ENCODE measurements at regions of chr10 and their contacts with region 1.

Region 1: GRCh38 chr10:96831867-96832720 is at the start of gene LCOR:
- DNase-seq: peak; percentile 71
- ATAC-seq: peak; percentile 62
- H3K4me3 ChIP-seq: peak within 1 kb of the TSS; percentile 84 to 95 (median 88)
- H3K27ac ChIP-seq: peak within 1 kb of the TSS; percentile 82
- H3K4me1 ChIP-seq: peaks cover 48% of the 10 kb centered on the region
- H3K27me3 ChIP-seq: peaks cover 0 to 1% of the 10 kb centered on the region in 2 experiments; a peak in 1 of 5 replicates
- CTCF ChIP-seq: no peak
- EP300 ChIP-seq: no peak
- POLR2A ChIP-seq: peak; percentile 75 to 90
- RAD21 ChIP-seq: no peak
- total RNA-seq, gene LCOR: 23.7 and 42.0 TPM in 2 replicates

Region 2: DNA sequence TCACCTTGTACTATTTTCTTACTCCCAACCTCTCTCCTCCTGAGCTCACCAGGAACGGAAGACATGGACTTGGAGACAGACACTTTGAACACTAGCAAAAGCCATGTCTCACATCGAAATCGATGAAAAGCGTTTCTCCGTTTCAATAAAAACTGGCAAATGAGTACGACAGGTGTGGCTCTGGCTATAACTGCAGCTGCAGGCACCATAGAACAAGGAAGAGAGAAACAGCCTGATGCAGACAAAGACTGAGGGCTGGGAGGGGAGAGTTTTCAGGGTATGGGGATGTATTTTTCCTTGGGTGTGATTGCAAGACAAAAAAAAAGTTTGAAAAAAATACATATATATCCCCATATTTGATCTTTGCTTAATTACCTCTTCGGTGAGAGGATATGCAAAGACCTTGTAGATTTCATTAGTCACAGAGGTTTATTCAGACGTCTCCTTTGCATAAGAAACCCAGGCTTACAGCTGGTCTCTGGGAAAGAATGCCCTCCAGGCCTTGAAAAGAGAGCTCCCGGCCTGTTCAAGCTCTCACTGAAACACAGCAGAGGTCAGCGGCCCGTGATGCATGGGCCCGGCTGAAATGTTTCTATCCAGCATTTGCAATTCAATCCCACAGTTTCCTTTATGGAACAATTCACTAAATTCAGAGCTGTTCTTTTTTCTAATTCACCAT is 381.4 kb before region 1 on chr10:
- CTCF ChIA-PET with region 1: no interaction called
- POLR2A ChIA-PET with region 1: no interaction called
- in situ Hi-C with region 1: no loop called
- intact Hi-C with region 1: no loop called
- DNase-seq: no peak
- ATAC-seq: no peak
- H3K4me3 ChIP-seq: no peak overlapping the region
- H3K27ac ChIP-seq: no peak overlapping the region
- H3K4me1 ChIP-seq: no peaks in the 10 kb centered on the region
- H3K27me3 ChIP-seq: peaks cover 5 to 26% of the 10 kb centered on the region in 2 experiments; a peak in 4 of 5 replicates
- CTCF ChIP-seq: no peak
- EP300 ChIP-seq: no peak
- POLR2A ChIP-seq: no peak
- RAD21 ChIP-seq: no peak

Region 3: DNA sequence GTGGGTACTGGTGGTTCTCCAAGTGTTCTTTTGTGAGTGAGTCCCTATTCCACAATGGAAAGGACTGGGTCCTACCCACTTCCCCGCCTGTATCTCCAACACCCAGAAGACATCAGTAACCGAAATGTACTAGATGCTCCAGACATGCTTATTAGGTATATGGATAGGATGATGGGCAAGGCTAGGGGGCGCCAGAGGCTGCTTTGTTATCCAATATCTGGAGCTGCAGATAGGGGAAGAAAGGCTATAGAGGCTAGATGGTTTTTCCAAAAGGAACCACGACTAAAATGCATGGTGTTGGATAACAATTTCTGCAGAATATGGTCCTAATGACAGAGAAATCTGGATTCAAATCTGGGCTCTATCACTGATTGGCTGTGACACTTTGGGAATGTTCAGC is 189.1 kb before region 1 on chr10:
- CTCF ChIA-PET with region 1: interaction called, 8 read pairs
- POLR2A ChIA-PET with region 1: no interaction called
- in situ Hi-C with region 1: no loop called
- intact Hi-C with region 1: loop called (anchors 5 kb)
- DNase-seq: peak; percentile 54
- ATAC-seq: peak; percentile 84
- H3K4me3 ChIP-seq: no peak overlapping the region
- H3K27ac ChIP-seq: no peak overlapping the region
- H3K4me1 ChIP-seq: peaks cover 27% of the 10 kb centered on the region
- H3K27me3 ChIP-seq: no peaks in the 10 kb centered on the region; a peak in 1 of 5 replicates
- CTCF ChIP-seq: peak; percentile 81
- EP300 ChIP-seq: no peak
- POLR2A ChIP-seq: no peak
- RAD21 ChIP-seq: peak; percentile 72

Region 4: GRCh38 chr10:96765406-96766240 is 66.5 kb before region 1 on chr10:
- CTCF ChIA-PET with region 1: interaction called, 48 read pairs
- POLR2A ChIA-PET with region 1: no interaction called
- in situ Hi-C with region 1: loop called (anchors 5 kb)
- intact Hi-C with region 1: loop called (anchors 1 kb)
- DNase-seq: peak; percentile 62
- ATAC-seq: peak; percentile 97
- H3K4me3 ChIP-seq: no peak overlapping the region
- H3K27ac ChIP-seq: no peak overlapping the region
- H3K4me1 ChIP-seq: no peaks in the 10 kb centered on the region
- H3K27me3 ChIP-seq: no peaks in the 10 kb centered on the region
- CTCF ChIP-seq: peak; percentile 92
- EP300 ChIP-seq: no peak
- POLR2A ChIP-seq: no peak
- RAD21 ChIP-seq: peak; percentile 86

Region 5: GRCh38 chr10:96794866-96795733 is 37.0 kb before region 1 on chr10:
- CTCF ChIA-PET with region 1: no interaction called
- POLR2A ChIA-PET with region 1: interaction called, 3 read pairs
- in situ Hi-C with region 1: no loop called
- intact Hi-C with region 1: loop called (anchors 5 kb)
- DNase-seq: peak; percentile 27
- ATAC-seq: peak; percentile 49
- H3K4me3 ChIP-seq: peak overlapping the region in 2 of 3 experiments; percentile 4 to 26; a peak in 3 of 6 replicates
- H3K27ac ChIP-seq: no peak overlapping the region
- H3K4me1 ChIP-seq: peaks cover 49% of the 10 kb centered on the region
- H3K27me3 ChIP-seq: no peaks in the 10 kb centered on the region
- CTCF ChIP-seq: no peak
- EP300 ChIP-seq: no peak
- POLR2A ChIP-seq: no peak
- RAD21 ChIP-seq: no peak

Region 6: DNA sequence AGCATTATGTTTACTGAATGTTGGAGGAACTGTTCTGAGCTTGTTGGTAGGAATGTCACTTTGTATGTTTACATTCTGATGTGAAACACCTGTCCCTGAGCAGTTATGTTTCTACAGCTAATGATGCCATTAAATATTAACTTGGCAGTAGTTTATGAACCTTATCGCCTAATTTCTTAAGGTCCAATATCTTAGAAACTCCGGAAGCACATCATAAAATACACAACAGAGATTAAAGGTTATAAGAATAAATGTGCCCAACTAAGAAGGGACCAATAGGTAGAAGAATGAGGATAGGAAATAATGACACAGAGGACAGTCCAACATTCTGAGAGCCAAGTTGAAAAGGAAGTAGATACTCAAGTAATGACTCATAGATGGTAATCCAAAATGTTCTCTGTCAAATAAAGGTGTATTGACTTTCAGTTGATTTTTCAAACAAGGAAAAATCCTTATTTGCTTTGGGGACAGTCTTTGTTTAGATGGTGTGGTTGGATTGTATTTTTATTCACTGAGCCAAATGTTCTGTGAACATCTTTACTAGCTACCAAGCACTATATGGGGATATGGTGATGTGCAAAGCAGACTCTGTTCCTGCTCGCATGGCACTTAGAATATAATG is 31.9 kb after region 1 on chr10:
- CTCF ChIA-PET with region 1: no interaction called
- POLR2A ChIA-PET with region 1: interaction called, 10 read pairs
- in situ Hi-C with region 1: no loop called
- intact Hi-C with region 1: no loop called
- DNase-seq: peak; percentile 94
- ATAC-seq: peak; percentile 90
- H3K4me3 ChIP-seq: peak overlapping the region in 1 of 3 experiments; percentile 26; a peak in 1 of 6 replicates
- H3K27ac ChIP-seq: peak overlapping the region; percentile 68
- H3K4me1 ChIP-seq: peaks cover 81% of the 10 kb centered on the region
- H3K27me3 ChIP-seq: no peaks in the 10 kb centered on the region
- CTCF ChIP-seq: no peak
- EP300 ChIP-seq: peak in 1 of 2 experiments; percentile 77; a peak in 2 of 4 replicates
- POLR2A ChIP-seq: no peak
- RAD21 ChIP-seq: no peak

Region 7: DNA sequence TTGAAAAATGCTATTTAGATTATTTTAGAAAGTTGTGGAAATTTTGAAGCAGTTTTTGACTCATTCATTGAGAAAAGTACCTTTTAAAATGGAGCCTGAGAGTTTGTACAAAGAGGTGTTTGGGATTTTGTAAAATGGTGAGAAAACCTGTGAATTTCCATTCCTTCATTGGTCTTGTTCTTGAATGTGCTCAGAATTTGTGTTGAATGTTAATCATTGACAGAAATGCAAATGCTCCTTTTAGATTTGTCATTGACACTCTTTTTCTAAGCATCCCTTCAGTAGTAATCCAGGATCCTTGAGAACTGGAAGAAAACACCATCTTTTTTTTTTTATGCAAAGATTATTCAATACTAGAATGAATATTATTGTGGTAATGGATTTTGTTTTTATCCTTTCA is 74.8 kb after region 1 on chr10:
- CTCF ChIA-PET with region 1: no interaction called
- POLR2A ChIA-PET with region 1: no interaction called
- in situ Hi-C with region 1: no loop called
- intact Hi-C with region 1: loop called (anchors 5 kb)
- DNase-seq: no peak
- ATAC-seq: no peak
- H3K4me3 ChIP-seq: no peak overlapping the region
- H3K27ac ChIP-seq: no peak overlapping the region
- H3K4me1 ChIP-seq: peaks cover 53% of the 10 kb centered on the region
- H3K27me3 ChIP-seq: no peaks in the 10 kb centered on the region
- CTCF ChIP-seq: no peak
- EP300 ChIP-seq: no peak
- POLR2A ChIP-seq: no peak
- RAD21 ChIP-seq: no peak

Region 8: GRCh38 chr10:97025613-97026242 is 193.6 kb after region 1 on chr10:
- CTCF ChIA-PET with region 1: no interaction called
- POLR2A ChIA-PET with region 1: no interaction called
- in situ Hi-C with region 1: no loop called
- intact Hi-C with region 1: no loop called
- DNase-seq: peak; percentile 50
- ATAC-seq: peak; percentile 75
- H3K4me3 ChIP-seq: no peak overlapping the region
- H3K27ac ChIP-seq: no peak overlapping the region
- H3K4me1 ChIP-seq: peaks cover 53% of the 10 kb centered on the region
- H3K27me3 ChIP-seq: peaks cover 2 to 10% of the 10 kb centered on the region in 2 experiments; a peak in 3 of 5 replicates
- CTCF ChIP-seq: peak; percentile 77
- EP300 ChIP-seq: no peak
- POLR2A ChIP-seq: no peak
- RAD21 ChIP-seq: 0 out of 2 replicates have a peak, but pooled peaks have one; percentile 8

Region 9: DNA sequence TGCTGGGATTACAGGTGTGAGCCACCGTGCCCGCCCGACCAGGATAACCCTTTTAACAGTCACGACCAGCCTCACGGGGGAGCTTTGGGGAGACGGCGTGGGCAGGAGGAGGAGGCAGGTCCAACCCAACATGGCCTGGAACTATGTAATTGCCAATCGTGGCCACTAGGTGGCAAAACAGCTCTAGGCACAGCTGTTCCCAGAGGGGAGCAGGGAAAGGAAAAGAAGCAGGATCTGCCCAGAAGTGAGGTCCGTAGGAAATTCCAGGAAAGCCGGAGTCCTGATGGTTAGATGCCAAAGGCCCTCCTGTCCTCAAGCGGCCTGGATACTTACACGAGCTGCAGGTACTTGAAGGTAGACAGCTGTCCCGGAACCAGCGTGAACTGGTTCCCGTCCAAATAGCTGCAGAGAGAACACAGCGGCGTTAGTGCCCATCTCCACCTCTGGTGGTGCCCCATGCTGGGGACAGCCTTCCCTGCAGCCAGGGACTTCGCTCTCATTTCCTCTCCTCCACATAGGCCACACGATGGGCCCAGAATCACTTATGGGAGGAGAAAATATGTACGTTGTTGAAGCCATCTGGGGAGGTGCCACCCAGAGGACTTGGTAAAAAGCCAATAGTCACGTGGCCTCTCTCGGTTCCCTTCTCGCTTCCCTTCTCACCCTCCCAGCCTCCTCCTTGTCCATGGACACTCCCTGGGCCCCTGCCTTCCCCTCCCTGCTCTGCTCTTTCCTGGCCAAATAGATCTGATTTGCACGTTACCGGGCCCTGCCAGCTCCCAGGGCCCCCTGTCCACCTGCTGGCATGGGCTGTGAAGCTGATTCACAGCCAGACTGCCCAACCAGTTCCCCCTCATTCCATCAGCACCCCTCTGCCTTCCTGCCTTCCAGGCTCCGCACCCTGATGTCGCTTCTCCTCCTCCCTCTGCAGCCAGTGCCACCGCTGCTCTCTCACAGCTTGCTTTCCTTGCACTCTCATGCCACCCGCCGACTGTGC is 205.6 kb after region 1 on chr10:
- CTCF ChIA-PET with region 1: no interaction called
- POLR2A ChIA-PET with region 1: no interaction called
- in situ Hi-C with region 1: no loop called
- intact Hi-C with region 1: loop called (anchors 5 kb)
- DNase-seq: peak; percentile 77
- ATAC-seq: peak; percentile 95
- H3K4me3 ChIP-seq: peak overlapping the region; percentile 22 to 65 (median 29)
- H3K27ac ChIP-seq: no peak overlapping the region
- H3K4me1 ChIP-seq: peaks cover 29% of the 10 kb centered on the region
- H3K27me3 ChIP-seq: peaks cover 3 to 28% of the 10 kb centered on the region in 2 experiments; a peak in 4 of 5 replicates
- CTCF ChIP-seq: peak; percentile 92
- EP300 ChIP-seq: no peak
- POLR2A ChIP-seq: no peak
- RAD21 ChIP-seq: peak; percentile 67